ENCODE measurements at regions of chr22 and their contacts with region 1.

Region 1: GRCh38 chr22:37594237-37594636 is 14.3 kb upstream of the LGALS2 start:
- DNase-seq: no peak
- ATAC-seq: no peak
- H3K4me3 ChIP-seq: no peak overlapping the region
- H3K4me3 Mint-ChIP-seq: no peak overlapping the region
- H3K27ac ChIP-seq: no peak overlapping the region
- H3K27ac Mint-ChIP-seq: no peak overlapping the region
- H3K4me1 ChIP-seq: peaks cover 0 to 5% of the 10 kb centered on the region in 2 donors
- H3K4me1 Mint-ChIP-seq: peaks cover 11 to 14% (median 12%) of the 10 kb centered on the region in 7 donors
- H3K27me3 ChIP-seq: no peaks in the 10 kb centered on the region
- H3K27me3 Mint-ChIP-seq: peaks cover 0 to 8% (median 0%) of the 10 kb centered on the region in 5 donors

Region 2: GRCh38 chr22:37486224-37486845 is 107.9 kb before region 1 on chr22 and contains the start of gene MFNG:
- CTCF ChIA-PET with region 1: interaction called, 9 read pairs
- POLR2A ChIA-PET with region 1: no interaction called
- intact Hi-C with region 1: loop called in 1 of 2 experiments (anchors 5 kb)
- DNase-seq: peak; percentile 57 to 82 (median 61)
- ATAC-seq: peak; percentile 81
- H3K4me3 ChIP-seq: peak within 1 kb of the TSS; percentile 84
- H3K4me3 Mint-ChIP-seq: peak within 1 kb of the TSS; percentile 91 to 99 (median 96)
- H3K27ac ChIP-seq: peak within 1 kb of the TSS; percentile 86
- H3K27ac Mint-ChIP-seq: peak within 1 kb of the TSS; percentile 94 to 99 (median 98)
- H3K4me1 ChIP-seq: peaks cover 25 to 57% of the 10 kb centered on the region in 2 donors
- H3K4me1 Mint-ChIP-seq: peaks cover 53 to 79% (median 68%) of the 10 kb centered on the region in 7 donors
- H3K27me3 ChIP-seq: no peaks in the 10 kb centered on the region
- H3K27me3 Mint-ChIP-seq: no peaks in the 10 kb centered on the region
- total RNA-seq, gene MFNG: 146 to 223 (median 203) TPM

Region 3: GRCh38 chr22:37538590-37539357 is 55.5 kb before region 1 on chr22:
- CTCF ChIA-PET with region 1: interaction called, 23 read pairs
- POLR2A ChIA-PET with region 1: interaction called, 11 read pairs
- intact Hi-C with region 1: loop called (anchors 1 kb)
- DNase-seq: peak; percentile 78 to 90 (median 87)
- ATAC-seq: peak; percentile 99
- H3K4me3 ChIP-seq: no peak overlapping the region
- H3K4me3 Mint-ChIP-seq: peak overlapping the region; percentile 15 to 64 (median 48)
- H3K27ac ChIP-seq: no peak overlapping the region
- H3K27ac Mint-ChIP-seq: peak overlapping the region in 5 of 9 donors; percentile 1 to 37 (median 7)
- H3K4me1 ChIP-seq: peaks cover 8 to 14% of the 10 kb centered on the region in 2 donors
- H3K4me1 Mint-ChIP-seq: peaks cover 14 to 44% (median 17%) of the 10 kb centered on the region in 7 donors
- H3K27me3 ChIP-seq: peaks cover 0 to 4% of the 10 kb centered on the region in 2 donors
- H3K27me3 Mint-ChIP-seq: peaks cover 4 to 18% (median 12%) of the 10 kb centered on the region in 5 donors

Region 4: DNA sequence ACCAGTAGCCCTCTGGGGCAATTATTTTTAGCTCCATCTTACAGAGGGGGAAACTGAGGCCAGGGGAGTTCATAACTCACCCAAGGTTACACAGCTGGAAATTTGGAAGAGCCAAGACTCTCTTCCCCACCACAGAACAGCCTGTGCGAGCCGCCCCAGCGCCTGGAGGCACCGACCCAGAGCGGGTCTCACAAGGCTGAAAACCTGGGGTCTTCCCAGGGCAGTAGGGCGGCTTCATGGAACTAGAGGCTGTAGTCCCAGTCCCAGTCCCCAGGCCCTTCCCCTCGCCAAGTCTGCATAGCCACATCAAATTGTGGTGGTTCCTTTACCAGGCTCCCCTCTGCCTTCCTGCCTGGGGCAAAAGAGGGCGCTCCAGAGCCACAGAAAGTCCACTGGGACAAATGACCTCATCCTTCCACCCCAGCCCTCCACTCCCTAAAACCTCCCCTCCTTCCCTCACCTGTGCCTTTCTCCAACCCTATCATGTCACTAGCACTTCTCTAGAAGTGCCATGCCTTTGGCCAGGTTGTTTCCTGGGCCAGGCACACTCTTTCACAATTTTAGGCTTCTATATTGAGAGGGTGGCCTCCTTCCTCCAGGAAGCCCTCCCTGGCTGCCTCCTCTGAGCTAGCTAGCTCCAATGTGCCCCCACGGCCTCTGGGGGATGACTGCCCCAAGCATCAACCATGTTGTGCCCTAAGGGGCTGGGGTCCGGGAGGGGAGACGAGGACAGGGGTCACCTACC is 49.1 kb before region 1 on chr22:
- CTCF ChIA-PET with region 1: interaction called, 23 read pairs
- POLR2A ChIA-PET with region 1: interaction called, 4 read pairs
- intact Hi-C with region 1: no loop called
- DNase-seq: peak in 5 of 9 donors; percentile 31 to 65 (median 37)
- ATAC-seq: peak; percentile 77
- H3K4me3 ChIP-seq: no peak overlapping the region
- H3K4me3 Mint-ChIP-seq: peak overlapping the region in 1 of 10 donors; percentile 17
- H3K27ac ChIP-seq: no peak overlapping the region
- H3K27ac Mint-ChIP-seq: peak overlapping the region in 1 of 9 donors; percentile 50
- H3K4me1 ChIP-seq: peaks cover 0 to 7% of the 10 kb centered on the region in 2 donors
- H3K4me1 Mint-ChIP-seq: peaks cover 8 to 27% (median 11%) of the 10 kb centered on the region in 7 donors
- H3K27me3 ChIP-seq: peaks cover 0 to 1% of the 10 kb centered on the region in 2 donors
- H3K27me3 Mint-ChIP-seq: peaks cover 0 to 14% (median 6%) of the 10 kb centered on the region in 5 donors

Region 5: DNA sequence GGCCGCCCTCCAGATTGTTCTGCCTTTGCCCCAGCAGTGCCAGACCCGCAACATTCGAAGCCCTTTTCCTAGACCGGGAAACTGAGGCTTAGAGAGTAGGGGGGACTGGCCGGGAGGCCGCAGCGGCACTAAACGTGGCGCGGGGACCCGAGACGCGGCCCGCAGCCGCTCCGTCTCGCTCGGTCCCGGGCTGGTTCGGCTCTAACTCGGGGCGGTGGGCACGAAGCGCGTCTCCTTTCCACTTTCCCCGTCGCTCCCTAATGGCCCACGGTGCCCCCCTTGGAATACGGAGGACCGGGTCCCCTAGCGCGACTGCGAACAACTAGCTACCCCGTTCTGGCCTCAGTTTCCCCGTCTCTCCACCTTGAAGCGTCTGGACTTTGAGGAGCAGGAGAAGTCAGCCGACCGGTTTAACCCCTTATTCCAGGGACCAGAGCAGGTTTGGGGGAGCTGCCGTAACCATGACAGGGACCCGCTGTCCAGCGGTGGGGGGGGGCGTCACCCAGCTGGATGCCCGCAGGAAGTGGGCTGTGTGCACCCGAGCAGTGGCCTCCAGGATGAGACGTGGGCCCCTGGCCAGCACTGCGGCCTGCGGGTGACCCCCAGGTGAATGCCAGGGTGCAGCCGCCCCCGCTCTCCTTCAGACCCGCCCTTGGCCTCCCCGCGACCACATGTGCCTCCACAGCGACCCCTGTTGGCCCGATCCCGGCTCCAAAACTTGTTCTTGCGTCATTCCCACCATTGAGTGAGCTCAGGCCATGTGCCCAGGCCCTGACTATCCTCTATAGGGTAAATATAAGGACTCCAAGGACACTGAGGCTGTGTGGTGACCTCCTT is 32.8 kb before region 1 on chr22:
- CTCF ChIA-PET with region 1: interaction called, 56 read pairs
- POLR2A ChIA-PET with region 1: interaction called, 26 read pairs
- intact Hi-C with region 1: loop called in 1 of 2 experiments (anchors 2 kb)
- DNase-seq: peak; percentile 28 to 83 (median 66)
- ATAC-seq: peak; percentile 83
- H3K4me3 ChIP-seq: no peak overlapping the region
- H3K4me3 Mint-ChIP-seq: peak overlapping the region; percentile 48 to 87 (median 78)
- H3K27ac ChIP-seq: no peak overlapping the region
- H3K27ac Mint-ChIP-seq: peak overlapping the region in 1 of 9 donors; percentile 78
- H3K4me1 ChIP-seq: peaks cover 21 to 22% of the 10 kb centered on the region in 2 donors
- H3K4me1 Mint-ChIP-seq: peaks cover 12 to 28% (median 22%) of the 10 kb centered on the region in 7 donors
- H3K27me3 ChIP-seq: peaks cover 11 to 14% of the 10 kb centered on the region in 2 donors
- H3K27me3 Mint-ChIP-seq: peaks cover 25 to 70% (median 31%) of the 10 kb centered on the region in 5 donors

Region 6: GRCh38 chr22:37581504-37581903 is 12.7 kb before region 1 on chr22:
- CTCF ChIA-PET with region 1: interaction called, 10 read pairs
- POLR2A ChIA-PET with region 1: interaction called, 5 read pairs
- intact Hi-C with region 1: loop called in 1 of 2 experiments (anchors 1 kb)
- DNase-seq: no peak
- ATAC-seq: no peak
- H3K4me3 ChIP-seq: no peak overlapping the region
- H3K4me3 Mint-ChIP-seq: peak overlapping the region in 2 of 10 donors; percentile 25 to 47
- H3K27ac ChIP-seq: no peak overlapping the region
- H3K27ac Mint-ChIP-seq: no peak overlapping the region
- H3K4me1 ChIP-seq: peaks cover 2 to 7% of the 10 kb centered on the region in 2 donors
- H3K4me1 Mint-ChIP-seq: peaks cover 11 to 28% (median 20%) of the 10 kb centered on the region in 7 donors
- H3K27me3 ChIP-seq: no peaks in the 10 kb centered on the region
- H3K27me3 Mint-ChIP-seq: peaks cover 0 to 22% (median 0%) of the 10 kb centered on the region in 5 donors

Measured in naive thymus-derived CD4-positive, alpha-beta T cell (primary cell).